Activated naive CD8-positive, alpha-beta T cell treated with anti-CD3 and anti-CD28 coated beads, Interleukin-2, amount 10 ng/mL, durations not matched to agents 7 days and 5 days (primary cell): ENCODE measurements at regions of chr10 and their contacts with region 1.

Region 1: DNA sequence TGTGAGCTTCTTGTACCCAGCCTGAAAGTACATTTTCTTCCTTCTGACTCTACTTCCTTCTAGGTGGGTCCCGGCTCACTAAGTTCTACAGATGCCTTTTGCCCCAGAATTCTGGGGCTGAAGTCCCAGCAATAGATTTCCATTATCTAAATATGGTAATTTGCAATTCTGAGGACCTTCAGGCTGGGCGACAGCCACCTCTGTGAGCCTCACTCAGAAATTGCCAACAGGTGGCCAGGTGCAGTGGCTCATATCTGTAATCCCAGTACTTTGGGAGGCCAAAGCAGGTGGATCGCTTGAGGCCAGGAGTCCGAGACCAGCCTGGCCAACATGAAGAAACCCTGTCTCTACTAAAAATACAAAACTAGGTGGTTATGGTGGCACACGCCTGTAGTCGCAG is 23.7 kb downstream of the CREM start:
- DNase-seq: no peak
- ATAC-seq: no peak
- H3K4me3 Mint-ChIP-seq: peak overlapping the region; percentile 60
- H3K27ac Mint-ChIP-seq: peak overlapping the region; percentile 85
- H3K4me1 Mint-ChIP-seq: peaks cover 59% of the 10 kb centered on the region
- H3K27me3 Mint-ChIP-seq: no peaks in the 10 kb centered on the region

Region 2: DNA sequence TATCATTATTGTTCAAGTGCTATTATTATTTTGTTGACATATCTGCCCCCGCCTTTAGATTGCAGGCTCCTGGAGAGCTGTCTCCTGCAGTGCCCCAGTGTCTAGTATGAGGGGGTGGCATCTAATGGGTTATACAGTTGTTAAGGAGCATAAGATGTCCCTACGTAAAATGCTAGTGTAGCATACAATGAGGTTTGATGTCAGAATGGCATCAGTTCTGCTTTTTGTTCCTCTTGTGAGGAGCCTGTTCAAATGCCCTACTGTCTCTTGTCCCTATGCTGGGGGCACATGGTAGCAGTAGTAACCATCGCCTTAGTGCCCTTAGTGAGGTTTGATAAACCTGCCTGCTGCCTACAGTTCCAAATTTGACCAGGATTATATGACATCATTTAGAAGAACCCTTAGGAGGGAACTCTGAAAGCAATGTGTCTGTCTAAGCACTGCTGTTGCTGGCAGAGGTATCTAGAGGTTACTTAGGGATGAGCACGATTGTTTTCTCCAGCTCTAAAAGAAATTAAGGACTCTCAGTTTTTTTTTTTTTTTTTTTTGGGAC is 14.0 kb before region 1 on chr10:
- POLR2A ChIA-PET with region 1: interaction called, 12 read pairs
- DNase-seq: no peak
- ATAC-seq: peak; percentile 46
- H3K4me3 Mint-ChIP-seq: peak overlapping the region; percentile 63
- H3K27ac Mint-ChIP-seq: peak overlapping the region; percentile 79
- H3K4me1 Mint-ChIP-seq: peaks cover 41% of the 10 kb centered on the region
- H3K27me3 Mint-ChIP-seq: no peaks in the 10 kb centered on the region

Region 3: GRCh38 chr10:35208536-35208935 is 58.2 kb after region 1 on chr10:
- POLR2A ChIA-PET with region 1: interaction called, 10 read pairs
- DNase-seq: peak; percentile 60
- ATAC-seq: peak; percentile 94
- H3K4me3 Mint-ChIP-seq: peak overlapping the region; percentile 81
- H3K27ac Mint-ChIP-seq: peak overlapping the region; percentile 94
- H3K4me1 Mint-ChIP-seq: peaks cover 56% of the 10 kb centered on the region
- H3K27me3 Mint-ChIP-seq: no peaks in the 10 kb centered on the region

Region 4: GRCh38 chr10:35236739-35237138 is 86.4 kb after region 1 on chr10:
- POLR2A ChIA-PET with region 1: no interaction called
- DNase-seq: no peak
- ATAC-seq: no peak
- H3K4me3 Mint-ChIP-seq: no peak overlapping the region
- H3K27ac Mint-ChIP-seq: no peak overlapping the region
- H3K4me1 Mint-ChIP-seq: no peaks in the 10 kb centered on the region
- H3K27me3 Mint-ChIP-seq: no peaks in the 10 kb centered on the region

Region 5: DNA sequence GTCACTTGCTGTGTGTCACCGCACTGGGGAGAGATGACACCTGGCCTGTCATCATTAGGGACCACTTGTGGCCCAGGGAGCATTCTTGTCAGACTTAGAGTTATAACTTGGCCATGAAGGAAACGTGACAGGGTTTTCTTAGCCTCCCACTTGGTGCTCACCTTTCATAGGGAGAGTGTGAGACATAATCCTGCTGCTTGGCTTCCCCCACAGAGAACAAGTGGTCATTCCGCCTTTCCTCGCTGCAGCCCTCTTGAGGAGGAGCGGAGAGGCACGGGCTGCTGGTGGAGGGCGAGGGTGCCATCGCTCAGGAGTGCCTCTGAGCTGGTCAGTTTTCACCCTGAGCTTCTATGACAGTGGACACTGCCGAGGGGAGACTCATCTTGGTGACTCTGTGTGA is 329.8 kb after region 1 on chr10:
- POLR2A ChIA-PET with region 1: no interaction called
- DNase-seq: no peak
- ATAC-seq: no peak
- H3K4me3 Mint-ChIP-seq: no peak overlapping the region
- H3K27ac Mint-ChIP-seq: no peak overlapping the region
- H3K4me1 Mint-ChIP-seq: no peaks in the 10 kb centered on the region
- H3K27me3 Mint-ChIP-seq: no peaks in the 10 kb centered on the region